Dorsolateral prefrontal cortex (tissue), 120 donors: ENCODE measurements at regions of chr3 and their contacts with region 1.

Region 1: GRCh38 chr3:127762077-127762786 is 60.1 kb downstream of the MGLL start:
- DNase-seq: peak in 4 of 10 donors; percentile 39 to 74 (median 57)
- H3K4me3 ChIP-seq: peak overlapping the region in 34 of 59 donors; percentile 0 to 46 (median 20)
- H3K27ac ChIP-seq: peak overlapping the region in 57 of 59 donors; percentile 15 to 94 (median 83)
- H3K27me3 ChIP-seq: no peaks in the 10 kb centered on the region
- CTCF ChIP-seq: no peak

Region 2: DNA sequence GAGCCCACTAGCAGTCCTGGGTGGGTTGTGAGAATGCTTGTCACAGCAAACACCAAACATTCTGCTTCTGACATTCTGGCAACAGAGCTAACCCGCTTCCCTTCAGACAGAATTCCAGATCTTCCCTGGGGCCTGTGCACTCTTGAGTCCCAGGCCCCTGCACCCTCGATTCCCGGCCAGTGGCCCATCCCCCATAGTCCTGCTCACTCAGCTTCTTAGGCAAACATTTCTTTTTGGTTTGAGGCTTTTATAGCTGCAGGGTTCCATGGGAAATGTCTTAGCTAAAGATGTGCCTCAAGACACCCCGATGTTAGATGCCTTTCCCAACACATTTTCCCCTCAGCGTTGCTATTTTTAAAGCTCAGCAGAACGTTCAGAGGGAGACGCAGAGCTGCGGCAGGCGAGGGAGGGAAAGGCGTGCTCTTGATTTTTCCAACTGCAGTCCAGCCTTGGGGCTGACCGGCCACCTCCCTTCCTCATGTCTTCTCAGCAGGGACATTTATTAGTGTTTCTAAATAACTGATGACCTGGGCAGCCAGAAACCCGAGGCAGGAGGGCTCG is 54.3 kb before region 1 on chr3:
- intact Hi-C with region 1: loop called in 1 of 2 experiments (anchors 5 kb)
- DNase-seq: peak in 3 of 10 donors; percentile 27 to 39 (median 37)
- H3K4me3 ChIP-seq: no peak overlapping the region
- H3K27ac ChIP-seq: peak overlapping the region in 58 of 59 donors; percentile 19 to 92 (median 83)
- H3K27me3 ChIP-seq: no peaks in the 10 kb centered on the region
- CTCF ChIP-seq: no peak

Region 3: GRCh38 chr3:127735767-127736704 is 26.2 kb before region 1 on chr3:
- intact Hi-C with region 1: no loop called
- DNase-seq: peak in 1 of 10 donors; percentile 43
- H3K4me3 ChIP-seq: peak overlapping the region in 25 of 59 donors; percentile 1 to 44 (median 15)
- H3K27ac ChIP-seq: peak overlapping the region in 53 of 59 donors; percentile 2 to 94 (median 69)
- H3K27me3 ChIP-seq: no peaks in the 10 kb centered on the region
- CTCF ChIP-seq: no peak

Region 4: GRCh38 chr3:127889461-127889863 is 127.2 kb after region 1 on chr3:
- intact Hi-C with region 1: no loop called
- DNase-seq: no peak
- H3K4me3 ChIP-seq: no peak overlapping the region
- H3K27ac ChIP-seq: peak overlapping the region in 12 of 59 donors; percentile 1 to 71 (median 28)
- H3K27me3 ChIP-seq: no peaks in the 10 kb centered on the region
- CTCF ChIP-seq: no peak

Region 5: GRCh38 chr3:128559486-128560225 is 797.4 kb after region 1 on chr3:
- intact Hi-C with region 1: no loop called
- DNase-seq: no peak
- H3K4me3 ChIP-seq: no peak overlapping the region
- H3K27ac ChIP-seq: no peak overlapping the region
- H3K27me3 ChIP-seq: peaks cover 0 to 46% (median 28%) of the 10 kb centered on the region in 45 donors
- CTCF ChIP-seq: no peak